ENCODE measurements at regions of chr10 and their contacts with region 1.

Region 1: GRCh38 chr10:127853868-127854768 is 38.6 kb downstream of the CLRN3 start:
- DNase-seq: peak; percentile 48 to 77 (median 65)
- H3K4me3 ChIP-seq: no peak overlapping the region
- H3K4me3 Mint-ChIP-seq: peak overlapping the region in 1 of 2 donors; percentile 84
- H3K27ac ChIP-seq: no peak overlapping the region
- H3K27ac Mint-ChIP-seq: no peak overlapping the region
- H3K4me1 ChIP-seq: peaks cover 16 to 21% of the 10 kb centered on the region in 2 donors
- H3K4me1 Mint-ChIP-seq: peaks cover 20% of the 10 kb centered on the region
- H3K27me3 ChIP-seq: peaks cover 0 to 5% of the 10 kb centered on the region in 2 donors
- H3K27me3 Mint-ChIP-seq: peaks cover 5 to 11% (median 10%) of the 10 kb centered on the region in 3 donors
- CTCF ChIP-seq: peak; percentile 89

Region 2: DNA sequence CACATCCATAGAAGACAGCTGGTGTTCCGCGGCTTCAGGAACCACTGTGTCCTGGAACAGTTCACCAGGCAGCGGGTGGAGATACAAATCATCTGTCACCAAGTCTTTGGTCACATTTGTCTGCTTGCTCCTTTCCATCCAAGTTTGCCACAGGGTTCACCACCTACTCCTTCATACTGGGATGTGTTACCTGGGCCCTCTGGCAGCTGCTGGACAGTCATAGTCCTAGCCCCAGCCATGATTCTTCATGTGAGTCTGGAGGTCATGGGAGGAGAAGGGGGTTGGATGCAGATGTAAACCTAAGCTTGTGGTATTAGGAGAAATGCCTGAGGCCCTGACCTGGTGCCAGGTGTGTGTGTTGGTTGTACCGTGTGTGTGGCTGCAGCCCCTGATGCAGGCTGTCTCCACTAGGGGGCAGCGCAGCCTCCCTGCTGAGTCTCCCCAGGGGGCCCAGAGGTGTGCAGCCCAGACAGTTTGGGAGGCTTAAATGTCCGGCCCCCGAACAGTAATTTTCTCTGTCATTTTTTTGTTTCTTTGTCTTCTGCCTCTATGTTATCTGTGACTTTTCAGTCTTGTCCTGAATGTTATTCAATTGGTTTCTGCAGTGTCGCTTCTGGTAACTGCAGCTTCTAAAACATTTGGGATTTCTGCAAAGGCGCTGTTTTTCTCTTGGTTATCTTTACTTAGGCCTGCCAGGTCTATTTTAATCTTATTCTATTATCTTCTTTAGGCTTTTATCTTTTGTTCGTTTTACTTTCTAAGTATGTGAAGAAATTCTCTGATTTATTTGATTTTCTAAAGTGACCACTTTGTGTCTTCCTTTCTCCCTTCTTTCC is 290.2 kb before region 1 on chr10:
- intact Hi-C with region 1: loop called (anchors 10 kb)
- DNase-seq: peak in 2 of 3 donors; percentile 2 to 12
- H3K4me3 ChIP-seq: no peak overlapping the region
- H3K4me3 Mint-ChIP-seq: no peak overlapping the region
- H3K27ac ChIP-seq: no peak overlapping the region
- H3K27ac Mint-ChIP-seq: no peak overlapping the region
- H3K4me1 ChIP-seq: no peaks in the 10 kb centered on the region
- H3K4me1 Mint-ChIP-seq: no peaks in the 10 kb centered on the region
- H3K27me3 ChIP-seq: no peaks in the 10 kb centered on the region
- H3K27me3 Mint-ChIP-seq: peaks cover 2 to 10% (median 3%) of the 10 kb centered on the region in 3 donors
- CTCF ChIP-seq: peak; percentile 82

Measured in CD14-positive monocyte (primary cell).